ENCODE measurements at regions of chr1 and their contacts with region 1.

Region 1: GRCh38 chr1:145957443-145958319 is at the start of gene LIX1L:
- DNase-seq: peak; percentile 96
- H3K4me3 Mint-ChIP-seq: peak within 1 kb of the TSS; percentile 86
- H3K27ac Mint-ChIP-seq: peak within 1 kb of the TSS; percentile 86
- H3K4me1 Mint-ChIP-seq: peaks cover 73% of the 10 kb centered on the region
- H3K27me3 Mint-ChIP-seq: peaks cover 5% of the 10 kb centered on the region
- total RNA-seq, gene LIX1L: 50.3 to 51.0 TPM

Region 2: DNA sequence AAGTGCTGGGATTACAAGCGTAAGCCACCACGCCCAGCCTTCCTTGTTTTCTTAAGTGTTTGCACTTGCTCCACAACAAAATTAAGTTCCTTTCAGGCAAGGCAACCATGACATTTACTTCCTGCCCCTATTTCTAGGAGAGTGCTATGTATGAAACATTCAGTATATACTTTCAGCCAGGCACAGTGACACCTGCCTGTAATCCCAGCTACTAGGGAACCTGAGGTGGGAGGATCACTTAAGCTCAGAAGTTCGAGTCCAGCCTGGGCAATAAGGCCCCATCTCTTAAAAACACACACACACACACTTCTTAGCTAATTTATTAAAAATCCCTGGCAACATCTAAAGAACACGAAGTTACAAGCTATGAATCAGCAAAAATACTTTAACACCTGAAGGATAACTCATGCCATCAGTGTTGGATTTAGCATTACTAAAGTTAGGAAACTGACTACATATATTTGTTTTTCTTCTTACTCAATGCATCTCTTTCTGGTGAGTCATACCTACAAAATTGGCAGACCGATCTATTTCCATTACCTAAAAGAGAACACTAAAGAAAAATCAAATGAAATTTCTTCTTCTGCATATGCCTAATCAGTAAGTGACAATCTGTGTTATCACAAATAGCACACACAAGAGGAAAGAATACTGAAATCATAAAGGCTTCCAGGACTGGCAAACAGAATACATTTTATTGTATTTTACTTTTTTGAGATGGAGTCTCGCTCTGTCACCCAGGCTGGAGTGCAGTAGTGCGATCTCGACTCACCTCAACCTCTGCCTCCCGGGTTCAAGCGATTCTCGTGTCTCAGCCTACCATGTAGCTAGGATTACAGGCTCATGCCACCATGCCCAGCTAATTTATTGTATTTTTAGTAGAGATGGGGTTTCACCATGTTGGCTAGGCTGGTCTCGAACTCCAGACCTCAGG is 175.2 kb before region 1 on chr1:
- CTCF ChIA-PET with region 1: no interaction called
- POLR2A ChIA-PET with region 1: no interaction called
- DNase-seq: no peak
- H3K4me3 Mint-ChIP-seq: no peak overlapping the region
- H3K27ac Mint-ChIP-seq: no peak overlapping the region
- H3K4me1 Mint-ChIP-seq: peaks cover 30% of the 10 kb centered on the region
- H3K27me3 Mint-ChIP-seq: no peaks in the 10 kb centered on the region

Region 3: GRCh38 chr1:145918144-145918992 is 39.3 kb before region 1 on chr1 and contains the start of gene PEX11B:
- CTCF ChIA-PET with region 1: interaction called, 4 read pairs
- POLR2A ChIA-PET with region 1: interaction called, 31 read pairs
- DNase-seq: peak; percentile 92
- H3K4me3 Mint-ChIP-seq: peak within 1 kb of the TSS; percentile 90
- H3K27ac Mint-ChIP-seq: peak within 1 kb of the TSS; percentile 94
- H3K4me1 Mint-ChIP-seq: peaks cover 47% of the 10 kb centered on the region
- H3K27me3 Mint-ChIP-seq: no peaks in the 10 kb centered on the region
- total RNA-seq, gene PEX11B: 29.0 to 33.2 TPM

Region 4: GRCh38 chr1:145996433-145997015 is 38.8 kb after region 1 on chr1 and contains the start of gene TXNIP:
- CTCF ChIA-PET with region 1: interaction called, 3 read pairs
- POLR2A ChIA-PET with region 1: interaction called, 66 read pairs
- DNase-seq: peak; percentile 96
- H3K4me3 Mint-ChIP-seq: peak within 1 kb of the TSS; percentile 93
- H3K27ac Mint-ChIP-seq: peak within 1 kb of the TSS; percentile 97
- H3K4me1 Mint-ChIP-seq: peaks cover 63% of the 10 kb centered on the region
- H3K27me3 Mint-ChIP-seq: no peaks in the 10 kb centered on the region
- total RNA-seq, gene TXNIP: 397 to 407 TPM

Region 5: DNA sequence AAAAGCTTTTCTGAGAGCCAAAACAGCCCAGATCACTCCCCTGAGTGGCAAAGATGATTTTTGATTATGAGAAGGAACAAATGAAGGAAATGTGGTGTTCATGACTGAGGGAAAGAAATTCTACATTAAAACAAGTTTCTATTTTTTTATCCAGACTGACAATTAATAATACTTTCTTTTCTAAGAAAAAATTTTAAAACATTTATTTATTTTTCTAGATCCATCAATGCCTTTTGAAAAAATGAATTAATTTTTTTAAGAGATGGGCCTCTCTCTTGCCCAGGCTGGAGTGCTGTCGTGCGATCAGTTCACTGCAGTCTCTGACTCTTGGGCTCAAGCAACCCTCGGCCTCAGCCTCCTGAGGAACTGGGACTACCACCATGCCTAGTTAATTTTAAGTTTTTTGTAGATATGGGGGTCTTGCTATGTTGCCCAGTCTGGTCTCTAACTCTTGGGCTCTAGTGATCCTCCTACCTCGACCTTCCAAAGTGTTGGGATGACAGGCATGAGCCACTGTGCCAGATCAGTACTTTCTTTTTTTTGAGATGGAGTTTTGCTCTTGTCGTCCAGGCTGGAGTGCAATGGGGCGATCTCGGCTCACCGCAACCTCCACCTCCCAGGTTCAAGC is 49.9 kb after region 1 on chr1:
- CTCF ChIA-PET with region 1: interaction called, 6 read pairs
- POLR2A ChIA-PET with region 1: interaction called, 11 read pairs
- DNase-seq: no peak
- H3K4me3 Mint-ChIP-seq: peak overlapping the region; percentile 55
- H3K27ac Mint-ChIP-seq: peak overlapping the region; percentile 87
- H3K4me1 Mint-ChIP-seq: peaks cover 36% of the 10 kb centered on the region
- H3K27me3 Mint-ChIP-seq: no peaks in the 10 kb centered on the region

Region 6: DNA sequence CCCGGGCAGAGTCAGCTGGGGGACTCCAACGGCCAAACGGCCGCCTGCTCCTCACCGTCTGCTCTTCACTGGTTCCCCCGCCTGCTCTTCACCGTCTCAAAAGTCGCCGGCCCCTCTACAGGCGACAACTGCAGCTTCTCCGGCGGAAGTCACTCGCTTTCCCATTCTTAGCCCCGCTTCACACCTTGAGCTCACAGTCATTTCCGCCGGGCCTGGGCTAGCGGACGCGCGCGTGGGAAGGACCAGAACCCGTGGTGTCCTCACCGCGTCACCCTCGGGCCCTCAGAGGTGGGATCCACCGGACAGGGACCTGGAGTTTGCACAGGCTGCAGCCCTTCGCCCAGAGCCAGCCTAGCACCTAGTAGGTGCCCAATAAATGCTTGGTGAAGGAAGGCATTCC is 91.8 kb after region 1 on chr1:
- CTCF ChIA-PET with region 1: no interaction called
- POLR2A ChIA-PET with region 1: interaction called, 29 read pairs
- DNase-seq: no peak
- H3K4me3 Mint-ChIP-seq: no peak overlapping the region
- H3K27ac Mint-ChIP-seq: no peak overlapping the region
- H3K4me1 Mint-ChIP-seq: peaks cover 32% of the 10 kb centered on the region
- H3K27me3 Mint-ChIP-seq: no peaks in the 10 kb centered on the region